Tibial artery (tissue), 4 donors: ENCODE measurements at regions of chr1 and their contacts with region 1.

Region 1: GRCh38 chr1:224922404-224923164 is 6.9 kb upstream of the DNAH14 start:
- DNase-seq: no peak
- H3K4me3 ChIP-seq: no peak overlapping the region
- H3K27ac ChIP-seq: no peak overlapping the region
- H3K4me1 ChIP-seq: no peaks in the 10 kb centered on the region
- H3K27me3 ChIP-seq: no peaks in the 10 kb centered on the region
- CTCF ChIP-seq: peak; percentile 38 to 44

Region 2: GRCh38 chr1:224513787-224514209 is 408.8 kb before region 1 on chr1:
- intact Hi-C with region 1: loop called (anchors 10 kb)
- DNase-seq: peak; percentile 79 to 84
- H3K4me3 ChIP-seq: no peak overlapping the region
- H3K27ac ChIP-seq: no peak overlapping the region
- H3K4me1 ChIP-seq: peaks cover 0 to 5% (median 0%) of the 10 kb centered on the region in 4 donors
- H3K27me3 ChIP-seq: no peaks in the 10 kb centered on the region
- CTCF ChIP-seq: peak; percentile 86 to 91

Region 3: DNA sequence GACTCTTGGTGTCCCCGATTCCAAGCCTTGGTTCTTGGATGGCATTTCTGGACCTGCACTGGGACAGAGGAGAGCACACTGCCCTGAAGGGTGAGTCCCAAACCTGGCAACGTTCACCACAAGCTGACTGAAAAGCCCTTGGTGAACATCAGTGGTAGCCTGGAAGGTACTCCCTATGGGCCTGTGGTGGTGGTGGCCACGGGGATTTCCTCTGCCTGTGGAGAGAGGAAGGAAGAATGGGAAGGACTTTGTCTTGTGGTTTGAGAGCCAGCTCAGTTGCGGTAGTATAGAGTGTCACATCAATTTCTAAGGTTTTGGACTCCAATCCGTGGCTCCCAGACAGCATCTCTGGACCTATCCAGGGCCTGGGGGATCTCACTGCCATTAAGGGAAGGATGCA is 57.6 kb after region 1 on chr1:
- intact Hi-C with region 1: no loop called
- DNase-seq: no peak
- H3K4me3 ChIP-seq: no peak overlapping the region
- H3K27ac ChIP-seq: no peak overlapping the region
- H3K4me1 ChIP-seq: no peaks in the 10 kb centered on the region
- H3K27me3 ChIP-seq: no peaks in the 10 kb centered on the region
- CTCF ChIP-seq: no peak

Region 4: DNA sequence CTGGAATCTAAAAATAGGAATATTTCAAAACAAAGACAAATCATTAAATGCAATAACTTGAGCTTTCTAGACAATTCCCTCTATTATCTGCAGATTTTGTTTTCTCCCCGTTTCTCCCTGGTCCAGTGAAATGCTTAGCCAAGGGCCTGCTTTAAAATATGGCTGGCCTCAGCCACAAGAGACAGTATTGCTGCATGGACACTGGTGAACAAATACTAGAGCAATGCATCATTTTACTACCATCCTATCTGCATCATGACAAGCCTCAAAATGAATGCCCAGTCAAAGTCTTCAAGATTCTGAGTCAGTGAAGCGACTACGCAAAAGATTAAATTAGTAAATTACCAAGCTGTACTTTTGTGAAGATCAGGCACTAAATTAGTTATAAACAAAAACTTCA is 649.8 kb after region 1 on chr1:
- intact Hi-C with region 1: no loop called
- DNase-seq: no peak
- H3K4me3 ChIP-seq: no peak overlapping the region
- H3K27ac ChIP-seq: no peak overlapping the region
- H3K4me1 ChIP-seq: peaks cover 0 to 74% (median 14%) of the 10 kb centered on the region in 4 donors
- H3K27me3 ChIP-seq: no peaks in the 10 kb centered on the region
- CTCF ChIP-seq: peak; percentile 14 to 32